ENCODE measurements at regions of chr6 and their contacts with region 1.

Region 1: DNA sequence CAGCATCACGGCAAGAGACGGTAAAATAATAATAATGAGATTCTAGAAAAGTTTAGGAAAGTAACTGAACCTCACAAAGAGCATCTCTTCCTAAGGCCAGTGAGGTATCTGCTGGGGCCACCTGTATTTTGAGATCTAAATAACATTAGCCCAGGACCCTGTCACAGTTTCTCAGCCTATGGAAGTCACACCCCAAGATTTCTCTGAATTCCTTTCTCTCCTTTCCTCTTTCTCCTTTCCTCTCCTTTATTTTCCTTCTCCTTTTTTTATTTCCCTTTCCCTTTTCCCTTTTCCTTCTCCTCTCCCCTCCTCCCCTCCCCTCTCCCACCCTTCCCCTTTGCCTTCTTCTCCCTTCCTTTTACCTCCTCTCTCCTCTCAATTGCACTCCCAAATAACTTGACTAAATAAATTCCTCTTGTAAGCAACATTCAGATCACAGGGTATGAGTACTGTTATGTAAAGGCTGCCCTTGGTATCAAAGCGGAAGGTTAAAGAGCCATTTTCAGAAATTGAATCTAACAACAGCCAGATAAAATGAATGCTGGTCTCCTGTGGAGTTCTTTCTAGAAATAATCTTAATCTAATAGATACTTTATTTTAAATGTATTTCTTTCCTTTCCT is 506.2 kb downstream of the EPM2A start:
- H3K4me3 ChIP-seq: no peak overlapping the region
- H3K27ac ChIP-seq: no peak overlapping the region
- H3K4me1 ChIP-seq: no peaks in the 10 kb centered on the region
- CTCF ChIP-seq: no peak

Region 2: DNA sequence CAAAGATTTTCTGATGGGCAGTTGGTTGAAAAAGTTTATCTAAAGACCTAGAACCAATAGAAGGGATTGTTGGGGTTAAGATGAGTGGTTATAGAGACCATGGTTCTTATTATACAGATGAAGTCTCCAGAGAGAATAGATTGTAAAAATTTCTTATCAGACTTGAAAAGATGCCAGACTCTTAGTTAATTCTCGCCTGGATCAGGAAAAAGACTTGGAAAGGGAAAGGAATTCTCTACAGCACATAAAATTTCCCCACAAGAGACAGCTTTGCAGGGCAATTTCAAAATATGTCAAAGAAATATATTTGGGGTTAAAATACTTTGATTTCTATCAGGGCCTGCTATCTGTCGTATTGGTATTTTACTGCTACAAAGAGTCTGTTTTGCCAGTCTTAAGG is 361.3 kb before region 1 on chr6:
- CTCF ChIA-PET with region 1: interaction called, 11 read pairs
- POLR2A ChIA-PET with region 1: no interaction called
- H3K4me3 ChIP-seq: no peak overlapping the region
- H3K27ac ChIP-seq: no peak overlapping the region
- H3K4me1 ChIP-seq: no peaks in the 10 kb centered on the region
- CTCF ChIP-seq: no peak

Region 3: DNA sequence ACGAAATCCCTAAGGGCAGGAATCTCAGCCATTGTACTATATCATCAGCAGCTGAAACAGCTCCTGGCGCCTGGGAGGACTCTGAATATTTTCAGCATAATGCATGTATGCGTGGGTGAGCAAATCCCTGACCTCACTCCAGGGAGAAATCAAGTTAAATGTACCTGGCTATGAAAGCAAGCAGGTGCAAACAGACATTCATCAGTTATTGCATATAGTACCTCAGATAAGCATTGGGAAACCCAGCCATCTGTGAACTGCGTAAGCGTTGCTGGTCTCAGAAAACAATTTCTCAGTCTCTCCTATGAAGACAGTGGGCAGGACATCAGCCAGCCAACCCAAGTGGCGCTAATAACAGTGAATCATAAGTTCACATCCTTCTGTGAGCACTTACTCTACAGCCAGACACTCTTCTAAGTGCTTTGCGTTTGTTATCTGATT is 116.3 kb before region 1 on chr6:
- CTCF ChIA-PET with region 1: no interaction called
- POLR2A ChIA-PET with region 1: no interaction called
- H3K4me3 ChIP-seq: no peak overlapping the region
- H3K27ac ChIP-seq: no peak overlapping the region
- H3K4me1 ChIP-seq: peaks cover 4% of the 10 kb centered on the region; the same call in 1 of the 2 replicates
- CTCF ChIP-seq: no peak